PC-3 (cell line): ENCODE measurements at regions of chr5 and their contacts with region 1.

Region 1: DNA sequence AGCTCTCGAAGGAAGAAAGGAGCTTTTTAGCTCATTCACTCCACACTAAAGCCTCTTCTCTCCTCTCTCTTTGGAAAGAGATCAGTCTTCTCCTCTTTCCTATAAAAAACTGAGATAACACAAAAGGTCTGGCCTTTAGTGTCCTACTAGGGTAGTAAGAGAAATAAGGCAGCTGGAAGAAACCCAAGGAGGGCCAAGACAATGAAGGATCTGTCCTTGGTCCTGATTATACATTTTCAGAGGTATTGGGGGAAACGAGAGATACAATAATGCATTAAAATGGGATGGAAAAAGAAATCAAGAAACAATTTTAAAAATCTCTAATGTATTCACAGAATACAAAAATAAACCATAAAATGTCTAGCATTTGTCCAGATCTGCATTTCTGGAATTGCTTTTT is 184.0 kb downstream of the SLF1 start:
- DNase-seq: peak; percentile 3
- ATAC-seq: no peak
- H3K4me3 ChIP-seq: no peak overlapping the region
- H3K27ac ChIP-seq: no peak overlapping the region
- H3K4me1 ChIP-seq: no peaks in the 10 kb centered on the region
- H3K27me3 ChIP-seq: no peaks in the 10 kb centered on the region
- CTCF ChIP-seq: no peak

Region 2: GRCh38 chr5:94700592-94700991 is 101.9 kb before region 1 on chr5:
- CTCF ChIA-PET with region 1: no interaction called
- POLR2A ChIA-PET with region 1: no interaction called
- intact Hi-C with region 1: no loop called
- DNase-seq: no peak
- ATAC-seq: no peak
- H3K4me3 ChIP-seq: no peak overlapping the region
- H3K27ac ChIP-seq: no peak overlapping the region
- H3K4me1 ChIP-seq: peaks cover 10% of the 10 kb centered on the region; the same call in 1 of the 2 replicates
- H3K27me3 ChIP-seq: no peaks in the 10 kb centered on the region
- CTCF ChIP-seq: no peak

Region 3: GRCh38 chr5:94884311-94884710 is 81.9 kb after region 1 on chr5:
- CTCF ChIA-PET with region 1: no interaction called
- POLR2A ChIA-PET with region 1: interaction called, 16 read pairs
- intact Hi-C with region 1: no loop called
- DNase-seq: no peak
- ATAC-seq: no peak
- H3K4me3 ChIP-seq: no peak overlapping the region
- H3K27ac ChIP-seq: no peak overlapping the region
- H3K4me1 ChIP-seq: no peaks in the 10 kb centered on the region
- H3K27me3 ChIP-seq: no peaks in the 10 kb centered on the region
- CTCF ChIP-seq: no peak